ENCODE measurements at regions of chr6 and their contacts with region 1.

Region 1: GRCh38 chr6:44096612-44097011 is 30.6 kb downstream of the MRPL14 start:
- DNase-seq: peak; percentile 82
- H3K4me3 Mint-ChIP-seq: no peak overlapping the region
- H3K27ac Mint-ChIP-seq: no peak overlapping the region
- H3K4me1 Mint-ChIP-seq: no peaks in the 10 kb centered on the region
- H3K27me3 Mint-ChIP-seq: no peaks in the 10 kb centered on the region

Region 2: DNA sequence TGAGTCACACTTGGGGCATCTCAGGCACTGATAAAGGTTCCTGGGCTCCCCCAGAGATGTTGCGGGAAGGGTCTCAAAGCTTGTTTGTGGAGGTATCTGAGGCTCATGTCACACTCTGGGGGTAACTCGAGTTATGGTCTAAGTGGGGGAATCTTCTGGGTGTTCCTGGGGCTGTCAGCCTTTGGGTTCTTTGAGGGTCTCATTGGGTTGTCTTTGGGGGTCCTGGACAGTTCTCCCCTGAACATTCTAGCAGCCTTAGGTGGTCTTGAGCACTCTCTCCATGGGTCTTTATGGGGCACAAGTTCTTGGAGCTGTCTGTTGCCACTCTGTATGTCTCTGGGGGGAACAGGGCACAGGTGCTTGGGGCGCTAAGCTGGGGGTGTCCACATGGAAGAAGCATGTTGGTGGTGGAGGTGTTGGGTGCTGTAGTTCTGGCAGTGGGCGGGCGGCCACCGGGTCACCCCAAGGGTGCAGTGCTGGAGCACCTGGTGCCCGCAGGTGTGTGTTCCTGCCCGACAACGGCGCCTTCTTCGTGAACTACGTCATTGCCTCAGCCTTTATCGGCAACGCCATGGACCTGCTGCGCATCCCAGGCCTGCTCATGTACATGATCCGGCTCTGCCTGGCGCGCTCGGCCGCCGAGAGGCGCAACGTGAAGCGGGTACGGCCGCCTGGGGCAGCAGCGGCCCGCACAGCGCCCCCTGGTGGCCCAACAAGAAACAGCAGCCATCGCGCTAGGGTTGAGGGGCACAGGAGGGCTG is 54.9 kb after region 1 on chr6:
- CTCF ChIA-PET with region 1: interaction called, 30 read pairs
- POLR2A ChIA-PET with region 1: no interaction called
- DNase-seq: peak; percentile 79
- H3K4me3 Mint-ChIP-seq: no peak overlapping the region
- H3K27ac Mint-ChIP-seq: no peak overlapping the region
- H3K4me1 Mint-ChIP-seq: peaks cover 5% of the 10 kb centered on the region
- H3K27me3 Mint-ChIP-seq: no peaks in the 10 kb centered on the region

Region 3: DNA sequence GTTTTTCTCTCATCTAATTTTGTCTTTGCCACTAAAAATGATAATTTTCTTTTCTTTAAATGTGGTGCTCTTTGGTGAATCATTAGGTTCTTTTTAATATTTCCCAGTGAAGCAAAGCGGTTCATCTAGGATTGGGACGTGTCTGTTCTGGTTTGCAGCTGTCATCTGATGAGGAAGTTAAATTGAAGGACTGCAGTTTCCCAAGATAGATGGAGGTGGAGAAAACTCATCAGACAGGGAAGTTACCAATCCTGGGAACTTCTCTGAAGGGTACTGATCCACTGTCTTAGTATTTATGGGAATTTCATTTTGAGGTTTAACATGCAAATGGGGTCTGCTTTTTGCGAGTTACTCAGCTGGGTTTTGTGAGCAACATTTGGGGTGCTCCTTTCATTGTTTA is 218.9 kb after region 1 on chr6:
- CTCF ChIA-PET with region 1: no interaction called
- POLR2A ChIA-PET with region 1: no interaction called
- DNase-seq: no peak
- H3K4me3 Mint-ChIP-seq: no peak overlapping the region
- H3K27ac Mint-ChIP-seq: no peak overlapping the region
- H3K4me1 Mint-ChIP-seq: peaks cover 18% of the 10 kb centered on the region
- H3K27me3 Mint-ChIP-seq: peaks cover 34% of the 10 kb centered on the region

Measured in activated CD4-positive, alpha-beta memory T cell treated with anti-CD3 and anti-CD28 coated beads, Interleukin-2, amount 10 ng/mL, durations not matched to agents 7 days and 5 days (primary cell).